HCT116 (cell line): ENCODE measurements at regions of chr2 and their contacts with region 1.

Region 1: DNA sequence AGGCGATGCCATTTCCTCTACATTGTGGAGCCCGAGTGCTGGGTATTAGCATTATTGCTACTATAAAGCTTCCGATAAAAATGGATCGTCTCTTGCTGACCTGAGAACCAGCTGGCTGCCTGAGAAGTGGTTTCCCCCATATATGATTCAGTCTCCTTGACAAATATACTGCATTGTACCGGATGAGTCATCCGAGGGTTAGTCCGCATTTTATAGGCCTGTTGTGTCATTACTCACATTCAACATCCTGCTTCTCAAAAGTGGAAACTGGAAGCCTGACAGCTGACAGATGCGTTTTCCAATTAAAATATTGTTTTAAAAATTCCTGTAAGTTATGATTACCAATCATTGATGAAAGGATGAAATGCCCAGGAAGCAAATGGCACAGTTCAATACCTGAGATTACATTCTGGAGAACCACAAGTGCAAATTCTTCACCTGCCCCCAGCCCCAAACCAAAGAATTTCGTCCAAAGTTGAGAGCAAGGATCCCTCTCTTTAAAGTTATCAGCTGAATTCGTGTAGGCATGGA is 65.7 kb downstream of the SPRED2 start:
- DNase-seq: peak; percentile 93
- ATAC-seq: peak; percentile 90
- H3K4me3 ChIP-seq: peak overlapping the region; percentile 8 to 17; a peak in 1 of 4 replicates
- H3K27ac ChIP-seq: peak overlapping the region; percentile 39; the same call in 1 of the 2 replicates
- H3K4me1 ChIP-seq: peaks cover 58 to 67% of the 10 kb centered on the region in 2 experiments
- H3K27me3 ChIP-seq: no peaks in the 10 kb centered on the region
- CTCF ChIP-seq: no peak
- POLR2A ChIP-seq: no peak
- RAD21 ChIP-seq: peak; percentile 1; the same call in 1 of the 2 replicates

Region 2: DNA sequence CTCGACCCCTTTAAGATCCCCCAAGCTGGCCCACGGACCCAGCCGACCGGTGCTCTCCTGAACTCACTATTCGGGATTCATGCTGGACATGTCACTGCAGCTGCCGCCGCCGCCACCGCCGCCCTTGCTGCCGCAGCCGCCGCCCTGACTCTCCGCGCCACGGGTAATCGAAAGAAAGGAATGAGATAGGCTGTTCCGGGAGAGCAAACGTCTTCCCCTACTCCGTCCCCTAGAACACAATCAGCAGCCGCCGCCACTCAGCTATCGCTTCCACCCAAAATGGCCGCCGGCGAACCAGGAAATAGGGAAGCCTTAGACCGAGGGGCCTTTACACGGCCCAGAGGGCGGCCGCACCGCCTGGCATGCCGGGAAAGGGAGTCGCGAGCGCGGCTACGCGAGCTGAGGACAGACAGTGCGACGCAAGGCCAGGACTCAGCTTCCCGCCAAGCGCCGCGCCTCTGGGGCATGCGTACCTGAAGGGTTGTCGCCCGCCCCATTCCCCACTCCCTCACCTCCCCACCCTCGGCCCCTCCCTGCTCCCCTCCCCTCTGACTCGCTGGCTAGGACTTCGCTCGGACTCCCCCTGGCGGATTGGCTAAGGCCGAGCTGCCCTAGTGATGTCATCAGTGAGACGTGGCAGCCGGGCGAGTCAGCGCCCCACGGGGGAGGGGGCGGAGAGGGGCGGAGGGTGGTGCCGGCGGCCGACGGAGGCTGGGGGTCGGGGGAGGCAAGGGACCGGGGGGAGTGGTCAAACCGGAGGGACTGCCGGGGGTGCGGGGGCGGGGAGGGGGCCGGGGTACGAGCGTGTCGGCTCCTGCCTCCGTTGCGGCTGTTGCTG is 236.6 kb before region 1 on chr2 and contains the start of gene RAB1A:
- CTCF ChIA-PET with region 1: no interaction called
- POLR2A ChIA-PET with region 1: no interaction called
- RAD21 ChIA-PET with region 1: no interaction called
- intact Hi-C with region 1: no loop called
- DNase-seq: peak; percentile 98
- ATAC-seq: peak; percentile 93
- H3K4me3 ChIP-seq: peak within 1 kb of the TSS; percentile 93 to 94
- H3K27ac ChIP-seq: peak within 1 kb of the TSS; percentile 81
- H3K4me1 ChIP-seq: peaks cover 32 to 48% of the 10 kb centered on the region in 2 experiments
- H3K27me3 ChIP-seq: no peaks in the 10 kb centered on the region
- CTCF ChIP-seq: peak in 1 of 3 experiments; percentile 11; a peak in 1 of 6 replicates
- POLR2A ChIP-seq: peak; percentile 57
- RAD21 ChIP-seq: no peak
- total RNA-seq, gene RAB1A: 131 TPM

Region 3: DNA sequence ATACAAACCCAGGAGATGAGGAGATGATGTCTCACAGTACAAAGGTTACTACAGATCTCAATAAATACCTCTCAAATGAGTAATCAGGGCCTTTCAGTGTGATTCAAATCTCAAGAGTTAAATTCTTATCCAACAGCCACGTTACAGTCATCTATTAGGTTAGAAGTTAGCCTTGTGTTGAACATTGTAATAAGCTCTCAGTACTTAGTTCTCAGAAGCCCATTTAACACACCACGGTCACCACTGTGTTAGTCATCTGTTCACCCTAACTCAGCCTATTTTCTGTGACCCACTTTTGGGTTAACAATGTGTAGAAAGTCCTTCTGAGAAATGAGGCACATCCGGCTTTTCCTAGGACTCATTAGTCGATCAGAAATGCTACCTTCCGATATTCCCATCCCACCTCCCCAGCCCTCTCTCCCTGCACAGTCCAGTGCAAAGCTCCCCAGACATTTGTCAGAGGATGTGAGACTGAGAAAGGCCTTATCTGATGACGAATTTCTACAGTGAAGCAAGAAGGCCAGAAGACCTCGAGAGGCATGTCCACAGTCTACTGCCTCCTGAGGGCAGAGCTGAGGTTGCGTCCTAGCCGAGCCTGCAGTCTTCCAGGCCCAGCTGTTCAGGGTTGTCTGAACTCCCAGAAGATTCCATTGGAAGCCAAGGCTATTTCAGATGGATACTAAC is 46.5 kb before region 1 on chr2:
- CTCF ChIA-PET with region 1: no interaction called
- POLR2A ChIA-PET with region 1: no interaction called
- RAD21 ChIA-PET with region 1: interaction called in 1 of 2 experiments, 3 read pairs
- intact Hi-C with region 1: loop called (anchors 5 kb)
- DNase-seq: peak; percentile 64
- ATAC-seq: peak; percentile 86
- H3K4me3 ChIP-seq: peak overlapping the region; percentile 17 to 49
- H3K27ac ChIP-seq: peak overlapping the region; percentile 56; the same call in 1 of the 2 replicates
- H3K4me1 ChIP-seq: peaks cover 18 to 40% of the 10 kb centered on the region in 2 experiments
- H3K27me3 ChIP-seq: no peaks in the 10 kb centered on the region
- CTCF ChIP-seq: peak; percentile 7 to 71 (median 65); a peak in 4 of 6 replicates
- POLR2A ChIP-seq: no peak
- RAD21 ChIP-seq: peak; percentile 28; the same call in 1 of the 2 replicates